Ascending aorta (tissue), 2 donors: ENCODE measurements at regions of chr10 and their contacts with region 1.

Region 1: GRCh38 chr10:5428133-5428532 is 15.8 kb downstream of the NET1 start:
- DNase-seq: no peak
- H3K4me3 ChIP-seq: peak overlapping the region in 1 of 2 donors; percentile 1
- H3K27ac ChIP-seq: peak overlapping the region; percentile 68 to 69
- H3K4me1 ChIP-seq: peaks cover 3 to 43% of the 10 kb centered on the region in 2 donors
- H3K27me3 ChIP-seq: no peaks in the 10 kb centered on the region
- CTCF ChIP-seq: no peak

Region 2: DNA sequence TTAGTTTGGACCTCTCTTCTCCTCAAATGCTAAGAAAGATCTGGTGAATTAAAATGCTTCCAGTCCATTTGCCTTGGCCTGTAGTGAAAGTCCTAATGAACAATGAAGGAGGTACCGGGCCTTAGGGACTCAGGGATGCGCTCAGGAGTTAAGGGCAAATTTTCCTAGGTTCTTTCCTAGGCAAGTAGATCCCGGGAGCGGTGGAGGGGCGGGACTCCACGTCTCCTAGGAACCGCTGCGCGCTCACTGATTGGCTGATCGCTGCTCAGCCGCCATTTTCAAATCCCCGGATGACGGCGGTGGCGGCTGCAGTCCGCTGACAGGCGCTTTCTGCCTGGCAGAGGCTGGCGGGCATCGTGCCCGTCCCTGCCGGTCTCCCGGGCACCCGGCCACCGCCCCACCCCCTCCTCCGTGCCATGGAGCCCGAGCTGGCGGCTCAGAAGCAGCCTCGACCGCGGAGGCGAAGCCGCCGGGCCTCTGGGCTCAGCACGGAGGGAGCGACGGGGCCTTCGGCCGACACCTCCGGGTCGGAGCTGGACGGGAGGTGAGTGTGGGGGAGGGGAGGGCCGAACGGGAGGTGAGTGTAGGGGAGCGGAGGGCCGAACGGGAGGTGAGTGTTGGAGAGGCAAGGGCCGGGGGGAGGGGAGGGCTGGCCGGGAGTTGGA is 15.7 kb before region 1 on chr10 and contains the start of gene NET1:
- intact Hi-C with region 1: loop called (anchors 2 kb)
- DNase-seq: peak; percentile 52 to 95
- H3K4me3 ChIP-seq: peak within 1 kb of the TSS; percentile 78 to 87
- H3K27ac ChIP-seq: peak within 1 kb of the TSS; percentile 88 to 96
- H3K4me1 ChIP-seq: peaks cover 0 to 6% of the 10 kb centered on the region in 2 donors
- H3K27me3 ChIP-seq: no peaks in the 10 kb centered on the region
- CTCF ChIP-seq: no peak
- total RNA-seq, gene NET1: 95.9 TPM